Dendritic cell treated with granulocyte-macrophage colony-stimulating factor and Interleukin-4, amounts not matched to agents 40 ng/mL and 50 ng/mL, for 4 days (primary cell): ENCODE measurements at regions of chr6 and their contacts with region 1.

Region 1: DNA sequence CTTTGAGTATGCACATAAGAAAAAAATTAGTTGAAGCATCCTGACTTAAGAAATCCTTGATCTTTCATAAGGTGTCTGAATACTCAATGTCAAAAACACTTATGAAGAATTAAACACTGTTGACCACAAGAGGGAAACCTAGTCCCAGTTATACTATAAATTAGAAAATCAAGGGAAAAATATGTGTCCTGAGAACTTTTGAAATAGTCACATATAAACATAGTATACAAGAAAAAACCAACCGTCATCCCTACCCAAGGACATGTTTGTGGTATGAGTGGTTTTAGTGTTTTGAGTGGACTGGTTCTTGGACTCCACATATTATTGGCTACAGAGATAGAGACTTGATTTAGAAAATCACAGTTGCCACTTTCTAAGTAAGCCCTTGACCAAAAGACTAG is 7.6 kb upstream of the HLA-DRA start:
- H3K4me3 Mint-ChIP-seq: no peak overlapping the region
- H3K27ac Mint-ChIP-seq: no peak overlapping the region
- H3K4me1 Mint-ChIP-seq: peaks cover 30% of the 10 kb centered on the region
- H3K27me3 Mint-ChIP-seq: no peaks in the 10 kb centered on the region

Region 2: GRCh38 chr6:32700391-32701040 is 268.5 kb after region 1 on chr6:
- intact Hi-C with region 1: loop called (anchors 5 kb)
- H3K4me3 Mint-ChIP-seq: no peak overlapping the region
- H3K27ac Mint-ChIP-seq: peak overlapping the region; percentile 5
- H3K4me1 Mint-ChIP-seq: peaks cover 25% of the 10 kb centered on the region
- H3K27me3 Mint-ChIP-seq: peaks cover 39% of the 10 kb centered on the region